Gastrocnemius medialis (tissue), 4 donors: ENCODE measurements at regions of chr10 and their contacts with region 1.

Region 1: GRCh38 chr10:73586583-73586984 is 4.6 kb downstream of the USP54 start:
- DNase-seq: peak in 1 of 2 donors; percentile 27
- ATAC-seq: peak; percentile 58 to 70
- H3K4me3 ChIP-seq: no peak overlapping the region
- H3K27ac ChIP-seq: peak overlapping the region; percentile 48 to 73 (median 54)
- H3K4me1 ChIP-seq: peaks cover 39 to 45% of the 10 kb centered on the region in 2 donors
- H3K27me3 ChIP-seq: no peaks in the 10 kb centered on the region
- CTCF ChIP-seq: no peak
- POLR2A ChIP-seq: no peak

Region 2: DNA sequence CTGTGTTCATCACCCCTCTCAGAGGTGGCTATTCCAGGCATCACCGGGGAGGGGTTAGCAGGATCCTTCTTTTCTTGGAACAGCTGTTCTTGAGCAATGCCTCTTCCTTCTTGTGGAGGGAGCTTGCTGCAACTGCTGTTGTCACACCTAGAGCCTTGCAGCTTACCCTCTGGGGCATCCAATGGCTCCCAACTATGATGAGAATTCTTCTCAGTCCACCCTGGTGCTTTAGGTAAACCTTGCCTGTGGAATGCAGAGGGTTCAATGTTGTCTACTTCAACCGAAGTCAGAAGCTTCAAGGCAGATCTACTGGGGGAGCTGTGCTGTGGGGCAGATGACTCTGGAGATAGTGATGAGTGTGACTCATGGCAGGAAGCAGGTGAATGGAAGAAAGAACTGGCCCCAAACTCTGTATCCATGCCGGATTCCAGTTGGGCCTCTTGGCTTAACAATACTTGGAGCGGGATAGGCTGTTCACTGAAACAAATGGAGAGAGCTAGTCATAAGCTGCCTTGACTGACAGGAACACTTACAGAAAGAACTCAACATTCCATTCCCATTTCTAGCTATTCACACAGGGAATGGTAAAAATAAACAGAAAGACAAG is 69.2 kb before region 1 on chr10:
- in situ Hi-C with region 1: no loop called
- intact Hi-C with region 1: no loop called
- DNase-seq: peak in 1 of 2 donors; percentile 47
- ATAC-seq: peak; percentile 76 to 77
- H3K4me3 ChIP-seq: no peak overlapping the region
- H3K27ac ChIP-seq: peak overlapping the region; percentile 54 to 69 (median 62)
- H3K4me1 ChIP-seq: no peaks in the 10 kb centered on the region
- H3K27me3 ChIP-seq: no peaks in the 10 kb centered on the region
- CTCF ChIP-seq: no peak
- POLR2A ChIP-seq: no peak

Region 3: DNA sequence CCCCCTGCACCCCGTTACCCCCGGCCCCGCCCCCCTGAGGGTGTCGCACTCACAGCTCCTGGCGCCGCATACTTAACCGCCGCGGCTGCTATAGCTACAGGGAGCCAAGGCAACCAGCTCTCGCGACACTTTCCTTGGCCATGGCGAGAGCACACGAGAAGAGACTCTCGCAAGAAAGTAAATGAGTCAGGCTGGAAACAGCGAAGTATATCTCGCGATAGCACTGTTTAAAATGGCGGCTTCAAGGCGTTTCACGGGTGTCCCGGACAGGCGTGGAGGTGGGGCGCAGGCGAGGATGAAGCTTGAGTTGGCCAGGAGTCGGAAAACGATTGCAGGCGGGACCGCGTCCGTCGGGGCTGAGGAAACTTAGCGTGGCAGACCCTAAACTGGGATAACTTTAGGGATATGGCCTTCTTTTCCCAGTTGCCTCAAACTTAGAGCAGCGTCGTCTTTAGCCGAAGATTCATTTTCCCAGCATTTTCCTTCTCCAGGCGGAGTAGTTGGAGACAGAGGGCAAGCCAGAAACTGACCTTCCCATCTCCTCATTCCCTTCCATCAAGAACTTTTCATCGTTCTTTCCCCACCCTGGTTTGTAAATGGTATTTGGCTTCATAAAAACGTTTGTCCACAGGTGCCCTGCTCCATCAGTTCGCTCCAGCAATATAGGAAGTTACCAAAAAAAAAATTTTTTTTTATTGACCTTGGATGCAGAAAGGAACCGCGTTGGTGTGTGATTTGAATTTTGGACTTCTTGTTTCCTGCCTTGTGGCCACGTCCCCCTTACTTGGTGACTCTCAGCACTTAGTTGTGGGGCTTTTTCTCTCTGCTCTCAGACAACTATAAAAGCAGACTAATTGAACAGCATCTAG is 39.5 kb after region 1 on chr10:
- in situ Hi-C with region 1: no loop called
- intact Hi-C with region 1: loop called (anchors 2 kb)
- DNase-seq: peak; percentile 89 to 94
- ATAC-seq: peak; percentile 97 to 99
- H3K4me3 ChIP-seq: peak overlapping the region; percentile 61 to 98 (median 90)
- H3K27ac ChIP-seq: peak overlapping the region; percentile 79 to 96 (median 83)
- H3K4me1 ChIP-seq: peaks cover 14 to 17% of the 10 kb centered on the region in 2 donors
- H3K27me3 ChIP-seq: no peaks in the 10 kb centered on the region
- CTCF ChIP-seq: no peak
- POLR2A ChIP-seq: peak in 1 of 2 donors; percentile 54

Region 4: GRCh38 chr10:73879296-73880173 is 293.0 kb after region 1 on chr10:
- in situ Hi-C with region 1: no loop called
- intact Hi-C with region 1: no loop called
- DNase-seq: peak; percentile 69 to 84
- ATAC-seq: peak; percentile 76 to 77
- H3K4me3 ChIP-seq: no peak overlapping the region
- H3K27ac ChIP-seq: peak overlapping the region in 3 of 4 donors; percentile 45 to 55 (median 47)
- H3K4me1 ChIP-seq: peaks cover 16 to 23% of the 10 kb centered on the region in 2 donors
- H3K27me3 ChIP-seq: no peaks in the 10 kb centered on the region
- CTCF ChIP-seq: peak; percentile 88 to 98 (median 97)
- POLR2A ChIP-seq: no peak